ENCODE measurements at regions of chr3 and their contacts with region 1.

Region 1: DNA sequence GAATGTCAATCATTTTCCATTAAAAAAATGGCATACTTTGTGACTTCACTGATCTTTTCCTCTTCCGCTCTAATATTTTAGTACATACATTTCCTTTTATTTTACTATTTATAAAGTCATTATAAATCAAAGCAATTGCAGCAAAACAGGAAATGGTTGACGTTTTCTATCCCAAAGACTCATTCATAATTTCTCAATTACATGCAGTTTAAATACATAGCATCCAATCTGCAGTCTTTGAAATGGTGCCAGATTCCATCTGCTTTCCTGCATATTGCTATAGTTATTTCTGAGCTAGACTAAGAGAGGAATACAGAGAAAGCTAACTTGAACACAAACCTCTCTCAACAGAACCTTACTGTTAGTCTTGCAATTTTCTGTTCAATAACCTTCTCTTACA is 179.8 kb downstream of the ZPLD1 start:
- DNase-seq: no peak
- H3K4me3 ChIP-seq: no peak overlapping the region
- H3K27ac ChIP-seq: no peak overlapping the region
- H3K4me1 ChIP-seq: no peaks in the 10 kb centered on the region
- H3K27me3 ChIP-seq: no peaks in the 10 kb centered on the region
- CTCF ChIP-seq: no peak
- POLR2A ChIP-seq: no peak

Region 2: DNA sequence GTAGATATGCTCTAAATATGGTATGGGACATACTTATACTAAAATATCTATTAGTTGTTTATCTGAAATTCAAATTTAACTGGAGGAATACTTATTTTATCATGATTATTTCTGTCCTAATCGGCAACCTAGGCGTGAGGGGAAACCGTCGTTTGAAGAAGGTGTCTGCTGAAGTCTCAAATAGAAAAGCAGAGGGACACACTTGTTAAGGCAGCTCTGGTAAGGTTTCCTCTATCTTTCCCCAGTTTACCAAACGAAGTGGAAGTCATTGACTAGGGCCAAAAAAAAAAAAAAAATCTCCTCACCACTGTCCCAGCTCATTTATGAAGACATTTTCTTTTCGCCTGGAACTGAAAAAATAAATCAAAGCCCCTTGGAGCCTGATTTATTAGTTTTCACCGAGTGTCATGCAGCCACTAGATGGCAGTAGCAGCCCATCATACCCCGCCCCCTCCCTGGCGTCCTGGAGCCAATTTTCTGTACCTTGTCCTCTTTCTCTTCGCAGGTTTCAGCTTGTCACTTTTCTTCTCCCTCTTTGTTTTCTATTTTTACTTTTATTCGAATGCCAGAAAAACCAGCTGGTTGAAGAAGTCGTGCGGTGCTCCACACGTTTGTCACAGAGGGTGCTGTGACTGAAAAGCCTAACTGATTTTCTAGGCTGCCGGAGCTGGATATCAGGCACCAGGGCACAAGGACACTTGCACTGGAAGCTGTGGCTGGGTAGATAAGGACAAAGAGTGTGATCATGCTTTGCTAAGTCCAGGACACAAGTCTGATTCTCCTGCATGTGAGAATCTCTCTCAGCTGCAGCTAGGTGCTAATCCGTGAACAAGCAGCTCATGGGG is 58.9 kb after region 1 on chr3:
- intact Hi-C with region 1: loop called (anchors 2 kb)
- DNase-seq: peak; percentile 20 to 62
- H3K4me3 ChIP-seq: peak overlapping the region in 1 of 3 donors; percentile 39
- H3K27ac ChIP-seq: no peak overlapping the region
- H3K4me1 ChIP-seq: no peaks in the 10 kb centered on the region
- H3K27me3 ChIP-seq: no peaks in the 10 kb centered on the region
- CTCF ChIP-seq: peak; percentile 15 to 65 (median 53)
- POLR2A ChIP-seq: no peak

Measured in breast epithelium (tissue), 4 donors.